ENCODE measurements at regions of chr14 and their contacts with region 1.

Region 1: GRCh38 chr14:20970983-20971704 is 15.9 kb downstream of the RNASE2 start:
- DNase-seq: peak; percentile 76 to 87
- ATAC-seq: peak; percentile 93 to 95
- H3K4me3 ChIP-seq: peak overlapping the region; percentile 67
- H3K27ac ChIP-seq: peak overlapping the region; percentile 89 to 90
- H3K4me1 ChIP-seq: peaks cover 19% of the 10 kb centered on the region
- CTCF ChIP-seq: peak; percentile 86
- EP300 ChIP-seq: no peak
- POLR2A ChIP-seq: peak; percentile 47; the same call in 1 of the 2 replicates
- RAD21 ChIP-seq: peak; percentile 63 to 64

Region 2: GRCh38 chr14:20836668-20837338 is 134.3 kb before region 1 on chr14:
- CTCF ChIA-PET with region 1: interaction called, 29 read pairs
- POLR2A ChIA-PET with region 1: no interaction called
- DNase-seq: peak; percentile 82 to 87
- ATAC-seq: peak; percentile 94 to 95
- H3K4me3 ChIP-seq: no peak overlapping the region
- H3K27ac ChIP-seq: peak overlapping the region; percentile 57 to 79
- H3K4me1 ChIP-seq: peaks cover 6% of the 10 kb centered on the region
- CTCF ChIP-seq: peak; percentile 73
- EP300 ChIP-seq: no peak
- POLR2A ChIP-seq: no peak
- RAD21 ChIP-seq: peak; percentile 83 to 84

Region 3: GRCh38 chr14:20904393-20905029 is 66.6 kb before region 1 on chr14:
- CTCF ChIA-PET with region 1: interaction called, 11 read pairs
- POLR2A ChIA-PET with region 1: no interaction called
- DNase-seq: no peak
- ATAC-seq: no peak
- H3K4me3 ChIP-seq: no peak overlapping the region
- H3K27ac ChIP-seq: no peak overlapping the region
- H3K4me1 ChIP-seq: no peaks in the 10 kb centered on the region
- CTCF ChIP-seq: no peak
- EP300 ChIP-seq: no peak
- POLR2A ChIP-seq: no peak
- RAD21 ChIP-seq: no peak

Region 4: DNA sequence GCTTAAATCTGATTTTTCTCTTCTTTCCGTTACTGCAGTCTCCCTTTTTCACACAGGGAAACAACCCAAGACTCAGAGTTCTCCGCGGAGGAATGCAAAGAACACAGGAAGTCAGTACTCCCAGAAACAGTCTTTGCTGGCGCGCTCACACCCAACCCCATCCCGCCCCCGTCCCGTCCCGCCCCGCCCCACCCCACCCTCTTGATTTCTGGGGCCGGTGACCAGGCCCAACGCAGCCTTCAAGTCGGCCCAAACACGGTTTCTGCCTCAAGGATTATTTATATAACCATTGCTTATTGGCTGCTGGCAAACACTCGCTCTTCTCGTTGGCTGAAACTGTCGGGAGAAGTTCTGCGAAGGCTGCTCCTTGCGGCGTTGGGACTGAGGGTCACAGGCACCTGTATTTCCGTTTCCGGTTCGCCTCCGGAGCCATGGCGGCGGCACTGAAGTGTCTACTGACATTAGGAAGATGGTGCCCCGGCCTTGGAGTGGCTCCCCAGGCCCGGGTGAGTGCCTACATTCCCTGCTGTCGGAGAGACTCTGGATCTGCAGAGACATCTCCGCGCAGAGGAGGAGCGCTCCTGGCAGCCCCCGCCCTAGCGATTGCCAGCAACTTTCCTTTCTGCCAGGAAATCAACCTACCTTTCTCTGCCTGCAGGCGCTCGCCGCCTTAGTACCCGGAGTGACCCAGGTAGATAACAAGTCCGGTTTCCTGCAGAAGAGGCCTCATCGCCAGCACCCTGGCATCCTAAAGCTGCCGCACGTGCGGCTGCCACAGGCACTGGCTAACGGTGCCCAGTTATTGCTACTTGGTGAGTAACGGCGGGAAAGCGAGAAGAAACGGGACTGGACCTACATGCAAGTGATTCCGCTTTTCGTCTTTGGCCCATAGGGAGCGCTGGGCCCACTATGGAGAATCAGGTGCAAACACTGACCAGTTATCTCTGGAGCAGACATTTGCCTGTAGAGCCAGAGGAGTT is 18.7 kb after region 1 on chr14 and contains the start of gene METTL17:
- CTCF ChIA-PET with region 1: interaction called, 186 read pairs
- POLR2A ChIA-PET with region 1: interaction called, 5 read pairs
- DNase-seq: peak; percentile 93 to 98
- ATAC-seq: peak; percentile 98
- H3K4me3 ChIP-seq: peak within 1 kb of the TSS; percentile 69
- H3K27ac ChIP-seq: peak within 1 kb of the TSS; percentile 76 to 91
- H3K4me1 ChIP-seq: peaks cover 32% of the 10 kb centered on the region
- CTCF ChIP-seq: no peak; the same call in 2 of the 3 replicates
- EP300 ChIP-seq: no peak
- POLR2A ChIP-seq: peak; percentile 70
- RAD21 ChIP-seq: 0 out of 5 replicates have a peak, but pooled peaks have one; percentile 9 to 13
- polyA plus RNA-seq, gene METTL17: 116 and 126 TPM in 2 replicates

Region 5: DNA sequence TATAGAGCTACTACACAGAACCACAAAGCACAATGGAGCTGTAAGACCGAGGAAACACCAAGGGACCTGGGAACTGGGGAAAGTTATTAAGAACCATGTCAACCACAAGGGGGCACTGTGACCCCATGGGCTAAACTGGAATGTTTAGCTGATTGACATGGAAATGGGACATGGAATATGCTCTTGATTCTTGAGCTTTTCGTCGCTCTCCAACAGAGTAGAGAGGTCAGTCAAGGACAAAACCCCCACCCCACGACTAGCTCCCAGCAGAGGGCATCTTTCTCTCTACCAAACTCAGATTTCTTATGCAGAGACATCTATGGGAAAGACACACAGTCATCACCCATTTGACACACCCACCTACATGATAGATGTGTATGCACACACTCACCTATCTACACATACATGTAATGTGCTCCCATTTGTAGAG is 43.6 kb after region 1 on chr14:
- CTCF ChIA-PET with region 1: interaction called, 37 read pairs
- POLR2A ChIA-PET with region 1: no interaction called
- DNase-seq: peak; percentile 76 to 86
- ATAC-seq: peak; percentile 92 to 95
- H3K4me3 ChIP-seq: no peak overlapping the region
- H3K27ac ChIP-seq: no peak overlapping the region
- H3K4me1 ChIP-seq: no peaks in the 10 kb centered on the region
- CTCF ChIP-seq: peak; percentile 93
- EP300 ChIP-seq: no peak
- POLR2A ChIP-seq: no peak
- RAD21 ChIP-seq: peak; percentile 90 to 96

Region 6: DNA sequence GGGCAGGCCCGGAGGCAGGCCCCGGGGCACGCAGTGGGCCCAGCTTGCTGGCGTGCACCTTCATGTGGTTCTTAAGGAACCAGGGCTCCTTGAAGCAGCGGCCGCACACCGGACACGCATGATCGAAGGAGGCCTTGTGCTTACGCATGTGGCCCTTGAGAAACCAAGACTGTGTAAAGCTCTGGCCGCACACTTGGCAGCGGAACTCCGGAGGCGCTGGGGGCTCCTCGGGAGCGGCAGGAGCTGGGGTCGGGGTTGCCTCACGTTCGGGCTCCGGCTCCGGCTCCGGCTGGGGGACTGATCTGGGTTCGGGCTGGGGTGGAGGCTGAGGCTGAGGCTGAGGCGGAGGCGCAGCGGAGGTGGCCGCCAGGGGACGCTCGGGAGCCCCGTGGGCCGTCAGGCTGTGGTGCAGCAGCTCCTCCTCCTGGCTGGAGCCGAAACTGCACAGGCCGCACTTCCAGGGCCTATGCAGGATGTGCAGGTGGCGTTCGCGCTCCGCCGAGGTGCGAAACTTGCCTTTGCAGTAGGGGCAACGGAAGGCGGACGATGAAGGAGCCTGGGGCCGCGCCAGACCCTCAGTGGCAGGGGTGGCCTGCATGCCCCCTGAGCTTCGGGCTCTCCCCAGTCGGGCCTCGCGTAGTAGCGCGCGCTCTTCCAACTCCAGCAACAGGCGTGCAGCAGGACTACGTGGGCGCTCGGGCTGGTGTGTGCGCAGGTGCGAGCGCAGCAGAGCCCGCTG is 121.3 kb after region 1 on chr14:
- CTCF ChIA-PET with region 1: interaction called, 12 read pairs
- POLR2A ChIA-PET with region 1: no interaction called
- DNase-seq: peak; percentile 74 to 83
- ATAC-seq: peak; percentile 52 to 87
- H3K4me3 ChIP-seq: no peak overlapping the region
- H3K27ac ChIP-seq: peak overlapping the region in 1 of 2 experiments; percentile 49; a peak in 3 of 6 replicates
- H3K4me1 ChIP-seq: peaks cover 41% of the 10 kb centered on the region
- CTCF ChIP-seq: peak; percentile 99
- EP300 ChIP-seq: no peak
- POLR2A ChIP-seq: no peak
- RAD21 ChIP-seq: peak; percentile 92 to 95

Region 7: GRCh38 chr14:21263656-21264411 is 292.7 kb after region 1 on chr14:
- CTCF ChIA-PET with region 1: no interaction called
- POLR2A ChIA-PET with region 1: no interaction called
- DNase-seq: no peak
- ATAC-seq: peak; percentile 52 to 61; a peak in 5 of 6 replicates
- H3K4me3 ChIP-seq: peak overlapping the region; percentile 10; the same call in 2 of the 3 replicates
- H3K27ac ChIP-seq: peak overlapping the region in 1 of 2 experiments; percentile 18; a peak in 1 of 6 replicates
- H3K4me1 ChIP-seq: peaks cover 63% of the 10 kb centered on the region
- CTCF ChIP-seq: no peak
- EP300 ChIP-seq: no peak
- POLR2A ChIP-seq: no peak
- RAD21 ChIP-seq: no peak

Region 8: DNA sequence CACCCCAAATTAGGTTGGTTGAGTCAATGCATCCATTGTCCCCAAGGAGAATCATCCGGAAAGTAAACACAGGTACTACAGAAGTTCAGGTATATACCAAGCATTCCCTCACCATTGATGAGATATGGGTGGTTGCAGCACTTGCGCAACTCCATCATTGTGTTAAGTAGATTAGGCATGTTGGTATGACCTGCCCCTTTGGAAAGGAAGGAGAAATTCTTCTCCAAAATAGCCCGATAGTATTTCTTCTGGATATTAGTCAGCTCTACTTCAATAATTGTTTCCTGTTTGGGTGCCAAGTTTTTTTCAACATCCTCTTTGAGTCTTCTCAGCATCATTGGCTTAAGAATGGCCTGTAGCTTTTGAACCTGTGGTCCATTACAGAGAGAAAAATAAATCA is 434.0 kb after region 1 on chr14:
- CTCF ChIA-PET with region 1: no interaction called
- POLR2A ChIA-PET with region 1: no interaction called
- DNase-seq: no peak
- ATAC-seq: no peak
- H3K4me3 ChIP-seq: no peak overlapping the region
- H3K27ac ChIP-seq: no peak overlapping the region
- H3K4me1 ChIP-seq: peaks cover 10% of the 10 kb centered on the region
- CTCF ChIP-seq: no peak
- EP300 ChIP-seq: no peak
- POLR2A ChIP-seq: no peak
- RAD21 ChIP-seq: no peak